Caco-2 (cell line): ENCODE measurements at regions of chr13 and their contacts with region 1.

Region 1: GRCh38 chr13:66765559-66765958 is 464.6 kb downstream of the PCDH9 start:
- DNase-seq: no peak
- H3K4me3 ChIP-seq: no peak overlapping the region
- H3K4me3 Mint-ChIP-seq: no peak overlapping the region
- H3K27ac Mint-ChIP-seq: no peak overlapping the region
- H3K4me1 ChIP-seq: no peaks in the 10 kb centered on the region
- H3K4me1 Mint-ChIP-seq: no peaks in the 10 kb centered on the region
- H3K27me3 ChIP-seq: no peaks in the 10 kb centered on the region
- H3K27me3 Mint-ChIP-seq: no peaks in the 10 kb centered on the region
- CTCF ChIP-seq: no peak

Region 2: DNA sequence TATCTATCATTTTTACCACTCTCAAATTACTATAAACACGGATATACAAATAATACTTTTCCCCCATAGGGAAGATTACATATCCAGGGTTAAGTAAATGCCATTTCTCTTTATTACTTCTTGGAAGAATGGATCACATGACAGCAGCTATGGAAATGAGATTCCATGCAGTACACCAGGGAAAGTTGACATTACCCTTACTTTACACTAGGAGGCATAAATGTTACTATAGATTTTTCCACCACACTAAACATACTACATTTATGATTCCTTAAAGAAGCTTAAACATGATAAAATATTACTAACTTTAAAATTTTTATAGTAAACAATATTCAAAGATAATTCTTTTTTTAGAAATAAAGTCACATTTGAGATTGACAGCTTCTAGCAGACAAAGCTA is 146.9 kb before region 1 on chr13:
- CTCF ChIA-PET with region 1: no interaction called
- POLR2A ChIA-PET with region 1: no interaction called
- intact Hi-C with region 1: loop called (anchors 5 kb)
- DNase-seq: no peak
- H3K4me3 ChIP-seq: no peak overlapping the region
- H3K4me3 Mint-ChIP-seq: no peak overlapping the region
- H3K27ac Mint-ChIP-seq: no peak overlapping the region
- H3K4me1 ChIP-seq: no peaks in the 10 kb centered on the region
- H3K4me1 Mint-ChIP-seq: no peaks in the 10 kb centered on the region
- H3K27me3 ChIP-seq: no peaks in the 10 kb centered on the region
- H3K27me3 Mint-ChIP-seq: no peaks in the 10 kb centered on the region
- CTCF ChIP-seq: peak; percentile 37